ENCODE measurements at regions of chr9 and their contacts with region 1.

Region 1: DNA sequence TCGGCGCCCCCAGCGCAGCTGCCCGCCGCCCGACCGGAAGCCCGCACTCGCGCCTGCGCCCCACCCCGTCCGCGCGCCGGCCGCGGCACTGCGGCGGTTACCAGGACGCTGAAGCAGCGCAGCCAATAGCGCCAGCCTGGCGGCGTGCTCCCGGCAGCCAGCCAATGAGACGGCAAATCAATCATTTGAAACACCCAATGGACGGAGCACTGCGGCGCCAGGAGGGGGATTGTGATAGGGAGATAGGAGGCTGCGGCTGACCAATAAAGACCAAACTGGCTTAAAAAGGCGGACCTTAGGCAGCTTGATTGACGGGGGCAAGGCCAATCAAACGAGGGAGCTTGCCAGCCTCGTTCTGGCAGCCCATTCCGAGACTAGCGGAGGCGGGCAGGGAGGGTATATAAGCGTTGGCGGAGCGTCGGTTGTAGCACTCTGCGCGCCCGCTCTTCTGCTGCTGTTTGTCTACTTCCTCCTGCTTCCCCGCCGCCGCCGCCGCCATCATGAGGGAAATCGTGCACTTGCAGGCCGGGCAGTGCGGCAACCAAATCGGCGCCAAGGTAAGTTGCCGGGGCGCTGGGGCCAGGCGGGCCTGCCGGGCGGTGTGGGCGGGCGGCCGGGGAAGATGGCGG is at the start of gene TUBB4B:
- DNase-seq: peak; percentile 93 to 100 (median 98)
- ATAC-seq: peak; percentile 79
- H3K4me3 ChIP-seq: peak within 1 kb of the TSS; percentile 68
- H3K4me3 Mint-ChIP-seq: peak within 1 kb of the TSS; percentile 91
- H3K27ac ChIP-seq: peak within 1 kb of the TSS; percentile 64 to 84
- H3K27ac Mint-ChIP-seq: peak within 1 kb of the TSS; percentile 89
- H3K4me1 ChIP-seq: peaks cover 64% of the 10 kb centered on the region
- H3K4me1 Mint-ChIP-seq: peaks cover 17% of the 10 kb centered on the region
- H3K27me3 ChIP-seq: no peaks in the 10 kb centered on the region
- H3K27me3 Mint-ChIP-seq: no peaks in the 10 kb centered on the region
- CTCF ChIP-seq: no peak
- total RNA-seq, gene TUBB4B: 93.8 to 98.2 TPM

Region 2: DNA sequence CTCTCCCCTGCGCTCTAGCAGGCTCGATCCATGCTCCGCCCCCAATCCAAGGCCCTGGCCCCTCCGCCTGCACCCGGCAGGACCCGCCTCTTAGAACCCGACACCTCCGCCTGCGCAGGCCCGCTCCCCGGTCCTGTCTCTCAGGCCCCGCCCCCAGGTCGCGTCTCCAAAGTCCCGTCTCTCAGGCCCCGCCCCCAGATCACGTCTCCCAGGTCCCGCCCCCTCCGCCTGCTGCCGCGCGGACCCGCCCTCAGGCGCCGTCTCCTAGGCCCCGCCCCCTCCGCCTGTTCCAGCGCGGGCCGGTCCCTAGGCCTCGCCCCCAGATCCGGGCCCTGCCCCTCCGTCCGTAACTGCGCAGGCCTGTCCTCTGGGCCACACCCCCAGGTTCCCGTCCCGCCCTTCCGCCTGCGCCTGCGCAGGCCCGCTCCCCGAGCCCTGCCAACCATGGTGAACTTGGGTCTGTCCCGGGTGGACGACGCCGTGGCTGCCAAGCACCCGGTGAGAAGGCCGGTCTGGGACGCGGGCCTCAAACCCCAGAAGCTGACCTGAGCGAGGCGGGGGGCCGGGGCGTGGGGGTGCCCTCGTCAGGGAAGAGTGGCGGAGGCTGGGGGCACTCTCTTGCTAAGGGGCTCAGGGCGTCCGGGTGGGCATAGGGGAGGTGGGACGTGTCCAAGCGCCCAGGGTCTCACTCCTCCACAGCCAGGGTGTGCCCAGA is 449.9 kb before region 1 on chr9 and contains the start of gene TMEM141:
- CTCF ChIA-PET with region 1: no interaction called
- POLR2A ChIA-PET with region 1: interaction called, 6 read pairs
- intact Hi-C with region 1: loop called in 1 of 2 experiments (anchors 5 kb)
- DNase-seq: peak; percentile 99 to 100 (median 100)
- ATAC-seq: peak; percentile 83
- H3K4me3 ChIP-seq: peak within 1 kb of the TSS; percentile 77
- H3K4me3 Mint-ChIP-seq: peak within 1 kb of the TSS; percentile 91
- H3K27ac ChIP-seq: peak within 1 kb of the TSS; percentile 95
- H3K27ac Mint-ChIP-seq: peak within 1 kb of the TSS; percentile 99
- H3K4me1 ChIP-seq: peaks cover 30% of the 10 kb centered on the region
- H3K4me1 Mint-ChIP-seq: peaks cover 41% of the 10 kb centered on the region
- H3K27me3 ChIP-seq: no peaks in the 10 kb centered on the region
- H3K27me3 Mint-ChIP-seq: no peaks in the 10 kb centered on the region
- CTCF ChIP-seq: no peak
- total RNA-seq, gene TMEM141: 14.6 to 17.1 TPM

Region 3: GRCh38 chr9:137095664-137096517 is 145.1 kb before region 1 on chr9:
- CTCF ChIA-PET with region 1: interaction called, 16 read pairs
- POLR2A ChIA-PET with region 1: interaction called, 17 read pairs
- intact Hi-C with region 1: loop called in 1 of 2 experiments (anchors 1 kb)
- DNase-seq: peak; percentile 78 to 95 (median 85)
- ATAC-seq: peak; percentile 98
- H3K4me3 ChIP-seq: peak overlapping the region; percentile 42
- H3K4me3 Mint-ChIP-seq: peak overlapping the region; percentile 86
- H3K27ac ChIP-seq: peak overlapping the region; percentile 59 to 85
- H3K27ac Mint-ChIP-seq: peak overlapping the region; percentile 92
- H3K4me1 ChIP-seq: peaks cover 28% of the 10 kb centered on the region
- H3K4me1 Mint-ChIP-seq: peaks cover 22% of the 10 kb centered on the region
- H3K27me3 ChIP-seq: no peaks in the 10 kb centered on the region
- H3K27me3 Mint-ChIP-seq: no peaks in the 10 kb centered on the region
- CTCF ChIP-seq: peak; percentile 80

Region 4: DNA sequence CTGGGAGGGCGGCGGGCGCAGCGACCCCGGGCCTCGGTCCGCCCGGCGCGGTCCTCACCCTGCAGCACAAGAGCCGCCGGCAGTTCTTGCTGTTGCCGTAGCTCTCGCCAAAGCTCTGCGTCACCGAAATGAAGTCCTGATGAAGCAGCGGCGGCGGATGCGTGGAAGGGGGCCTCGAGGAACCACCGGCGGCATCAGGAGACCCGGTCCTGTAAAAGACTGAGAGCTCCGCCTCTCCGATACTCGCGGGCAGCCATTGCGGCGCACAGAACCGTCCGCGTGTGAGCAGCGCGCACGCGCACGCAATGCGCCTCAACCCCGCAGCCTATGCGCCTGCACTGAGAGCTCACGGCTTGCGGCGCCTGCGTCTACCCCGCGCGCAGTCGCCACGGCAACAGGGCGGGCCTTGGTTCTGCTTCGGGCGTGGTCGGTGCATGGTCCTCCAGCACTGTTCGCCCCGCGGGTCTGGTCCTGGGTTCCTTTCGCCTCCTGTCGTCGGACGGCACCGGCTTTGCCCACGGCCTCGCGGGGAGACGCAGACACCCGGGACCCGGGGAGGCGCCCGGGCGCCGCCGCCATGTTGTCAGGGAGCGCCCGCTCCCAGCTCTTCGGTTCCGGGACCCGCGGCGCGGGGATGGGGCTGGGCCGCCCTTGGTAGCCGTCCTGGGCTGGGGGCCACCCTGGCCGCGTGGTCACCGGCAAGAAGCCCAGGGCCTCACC is 111.4 kb before region 1 on chr9:
- CTCF ChIA-PET with region 1: interaction called, 7 read pairs
- POLR2A ChIA-PET with region 1: interaction called, 20 read pairs
- intact Hi-C with region 1: no loop called
- DNase-seq: peak; percentile 80 to 97 (median 88)
- ATAC-seq: peak; percentile 92
- H3K4me3 ChIP-seq: peak overlapping the region; percentile 72
- H3K4me3 Mint-ChIP-seq: peak overlapping the region; percentile 94
- H3K27ac ChIP-seq: peak overlapping the region in 1 of 2 donors; percentile 84
- H3K27ac Mint-ChIP-seq: peak overlapping the region; percentile 81
- H3K4me1 ChIP-seq: peaks cover 37% of the 10 kb centered on the region
- H3K4me1 Mint-ChIP-seq: peaks cover 30% of the 10 kb centered on the region
- H3K27me3 ChIP-seq: peaks cover 5 to 7% of the 10 kb centered on the region in 2 experiments
- H3K27me3 Mint-ChIP-seq: peaks cover 8% of the 10 kb centered on the region
- CTCF ChIP-seq: no peak

Region 5: GRCh38 chr9:137200311-137201204 is 40.4 kb before region 1 on chr9 and contains the start of gene TPRN:
- CTCF ChIA-PET with region 1: interaction called, 7 read pairs
- POLR2A ChIA-PET with region 1: interaction called, 16 read pairs
- intact Hi-C with region 1: no loop called
- DNase-seq: peak; percentile 93 to 99 (median 98)
- ATAC-seq: peak; percentile 94
- H3K4me3 ChIP-seq: peak within 1 kb of the TSS; percentile 87
- H3K4me3 Mint-ChIP-seq: peak within 1 kb of the TSS; percentile 93
- H3K27ac ChIP-seq: peak within 1 kb of the TSS; percentile 72 to 76
- H3K27ac Mint-ChIP-seq: peak within 1 kb of the TSS; percentile 84
- H3K4me1 ChIP-seq: peaks cover 48% of the 10 kb centered on the region
- H3K4me1 Mint-ChIP-seq: peaks cover 23% of the 10 kb centered on the region
- H3K27me3 ChIP-seq: no peaks in the 10 kb centered on the region
- H3K27me3 Mint-ChIP-seq: no peaks in the 10 kb centered on the region
- CTCF ChIP-seq: no peak
- total RNA-seq, gene TPRN: 6.1 to 8.6 TPM

Region 6: DNA sequence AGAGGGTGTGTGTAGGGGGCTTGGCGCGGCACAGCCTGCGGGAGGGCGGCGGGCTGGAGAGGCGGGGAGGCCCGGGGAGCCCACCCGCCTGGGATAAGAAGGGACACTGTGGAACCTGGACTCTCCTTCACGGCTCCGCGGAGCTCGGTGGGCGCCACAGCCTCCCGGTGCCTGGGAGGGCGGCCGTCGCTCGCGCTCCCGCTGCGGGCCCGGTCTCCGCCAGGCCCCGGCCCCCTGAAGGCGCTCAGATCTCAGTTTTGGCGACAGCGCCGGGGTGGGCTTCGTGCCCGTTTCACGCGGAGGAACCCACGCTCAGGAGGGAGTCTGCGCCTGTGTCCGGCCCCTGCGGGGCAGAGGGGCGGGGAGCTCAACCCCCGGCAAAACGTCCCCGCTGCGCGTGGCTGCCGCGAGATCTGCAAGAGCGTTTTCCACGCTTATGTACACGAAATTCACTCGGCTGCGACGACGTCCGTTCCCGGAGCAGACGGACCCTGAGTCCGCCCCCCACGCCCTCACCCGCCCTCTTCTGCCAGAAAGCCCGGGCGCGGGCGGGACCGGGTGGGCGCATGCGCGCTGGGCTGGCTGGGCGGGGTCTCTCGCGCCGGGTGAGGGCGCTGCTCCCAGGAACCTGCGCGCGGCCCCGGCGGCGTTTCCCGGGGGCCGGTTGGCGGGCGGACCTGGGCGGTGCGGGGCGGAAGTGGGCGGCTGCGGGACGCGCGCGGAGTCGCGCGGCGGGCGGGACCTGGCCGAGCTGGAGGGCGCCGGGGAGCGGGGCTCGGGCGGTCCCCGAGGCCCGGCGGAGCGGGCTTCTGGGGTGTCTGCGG is 13.9 kb after region 1 on chr9 and contains the start of gene NELFB:
- CTCF ChIA-PET with region 1: interaction called, 18 read pairs
- POLR2A ChIA-PET with region 1: interaction called, 63 read pairs
- intact Hi-C with region 1: loop called in 1 of 2 experiments (anchors 1 kb)
- DNase-seq: peak; percentile 87 to 98 (median 96)
- ATAC-seq: peak; percentile 94
- H3K4me3 ChIP-seq: peak within 1 kb of the TSS; percentile 90
- H3K4me3 Mint-ChIP-seq: peak within 1 kb of the TSS; percentile 94
- H3K27ac ChIP-seq: no peak within 1 kb of the TSS
- H3K27ac Mint-ChIP-seq: peak within 1 kb of the TSS; percentile 82
- H3K4me1 ChIP-seq: peaks cover 25% of the 10 kb centered on the region
- H3K4me1 Mint-ChIP-seq: peaks cover 16% of the 10 kb centered on the region
- H3K27me3 ChIP-seq: no peaks in the 10 kb centered on the region
- H3K27me3 Mint-ChIP-seq: no peaks in the 10 kb centered on the region
- CTCF ChIP-seq: no peak
- total RNA-seq, gene NELFB: 20.7 to 21.2 TPM